Pancreas (tissue), 10 donors: ENCODE measurements at regions of chr15 and their contacts with region 1.

Region 1: DNA sequence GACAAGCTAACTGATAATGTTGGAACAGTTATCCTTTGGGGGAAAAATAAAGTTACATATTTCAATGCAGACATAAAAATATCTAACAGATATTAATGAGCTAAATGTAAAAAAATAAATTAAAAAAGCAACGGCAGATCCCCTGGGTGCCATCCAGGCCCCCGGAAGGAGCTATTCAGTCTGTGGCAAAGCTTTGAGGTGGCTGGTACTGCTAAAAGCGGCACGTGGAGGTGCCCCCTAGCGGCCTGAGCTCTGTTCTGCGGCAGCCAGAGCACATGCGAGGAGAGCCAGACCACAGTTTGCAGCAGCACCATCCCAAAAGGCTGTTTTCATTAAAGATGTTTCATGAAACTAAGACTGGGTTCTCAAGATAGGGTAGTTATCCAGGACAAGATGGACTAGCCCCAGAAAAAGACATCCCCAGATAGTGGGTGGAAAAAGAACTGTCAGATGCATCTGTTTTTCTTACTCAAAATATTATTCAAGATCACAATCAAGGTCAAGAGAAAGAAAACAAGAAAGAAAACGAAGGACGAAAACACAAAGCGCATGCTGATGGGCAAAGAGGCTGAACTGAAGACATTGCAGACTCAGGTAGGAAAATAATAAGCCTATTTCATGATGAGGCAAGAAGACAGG is 18.7 kb downstream of the AP3S2 start:
- DNase-seq: peak; percentile 76 to 93 (median 86)
- ATAC-seq: peak; percentile 90 to 96 (median 95)
- H3K4me3 ChIP-seq: no peak overlapping the region
- H3K27ac ChIP-seq: no peak overlapping the region
- H3K4me1 ChIP-seq: peaks cover 20 to 41% (median 41%) of the 10 kb centered on the region in 3 donors
- H3K27me3 ChIP-seq: no peaks in the 10 kb centered on the region
- CTCF ChIP-seq: peak; percentile 70 to 95 (median 84)

Region 2: GRCh38 chr15:89740137-89740536 is 134.9 kb before region 1 on chr15:
- intact Hi-C with region 1: loop called in 1 of 3 experiments (anchors 5 kb)
- DNase-seq: peak in 2 of 6 donors; percentile 56 to 73
- ATAC-seq: peak; percentile 85 to 98 (median 94)
- H3K4me3 ChIP-seq: no peak overlapping the region
- H3K27ac ChIP-seq: no peak overlapping the region
- H3K4me1 ChIP-seq: no peaks in the 10 kb centered on the region
- H3K27me3 ChIP-seq: no peaks in the 10 kb centered on the region
- CTCF ChIP-seq: peak; percentile 84 to 95 (median 94)

Region 3: DNA sequence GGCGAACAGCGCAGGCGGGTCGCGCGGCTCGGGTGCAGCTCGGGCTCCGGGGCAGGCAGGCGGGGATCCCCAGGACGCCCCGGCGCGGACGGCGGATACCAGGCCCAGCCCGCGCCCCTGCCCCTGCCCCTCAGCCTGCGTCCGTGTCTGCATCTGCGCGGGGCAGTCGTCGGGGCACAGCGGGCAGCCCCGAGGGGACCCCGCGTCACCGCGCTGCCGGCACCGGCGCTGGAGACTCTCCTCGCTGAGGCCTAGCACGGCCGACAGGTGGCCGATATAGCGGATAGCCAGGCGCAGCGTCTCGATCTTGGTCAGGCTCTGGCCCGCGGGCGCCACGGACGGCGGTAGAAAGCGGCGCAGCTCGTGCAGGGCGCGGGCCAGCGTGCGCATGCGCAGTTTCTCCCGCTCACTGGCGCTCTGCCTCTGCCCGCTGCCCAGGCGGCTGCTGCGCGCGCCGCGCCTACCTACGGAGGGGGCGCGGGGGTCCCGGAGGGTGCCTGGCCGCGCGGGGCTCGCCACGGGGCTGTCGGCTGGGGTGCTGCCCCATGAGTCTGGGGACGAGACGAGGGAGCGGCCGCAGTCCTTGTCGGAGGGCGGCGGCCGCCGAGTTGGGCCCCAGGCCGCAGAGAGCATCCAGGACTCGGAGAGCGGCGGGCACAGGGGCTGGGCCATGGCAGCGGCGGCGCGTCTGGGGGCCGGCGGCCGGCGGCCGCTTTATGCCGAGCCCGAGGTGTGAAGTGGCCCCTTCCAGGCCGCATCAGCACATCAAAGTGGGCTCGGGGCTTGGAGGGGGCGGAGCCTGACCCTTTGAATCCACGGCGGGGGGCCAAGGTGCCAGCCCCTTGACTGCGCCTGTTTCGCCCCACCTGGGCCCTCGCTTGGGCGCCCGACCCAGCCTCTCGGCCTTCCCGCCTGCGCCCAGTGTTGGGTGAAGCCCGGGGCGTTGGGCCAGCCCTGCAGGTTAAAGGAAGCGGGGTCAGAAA is 124.2 kb before region 1 on chr15 and contains the start of gene MESP1:
- intact Hi-C with region 1: loop called in 1 of 3 experiments (anchors 10 kb)
- DNase-seq: peak; percentile 91 to 99 (median 96)
- ATAC-seq: peak; percentile 87 to 92 (median 90)
- H3K4me3 ChIP-seq: peak within 1 kb of the TSS; percentile 33 to 67 (median 56)
- H3K27ac ChIP-seq: peak within 1 kb of the TSS; percentile 64 to 80 (median 72)
- H3K4me1 ChIP-seq: peaks cover 5 to 13% (median 11%) of the 10 kb centered on the region in 3 donors
- H3K27me3 ChIP-seq: no peaks in the 10 kb centered on the region
- CTCF ChIP-seq: peak; percentile 52 to 81 (median 78)
- total RNA-seq, gene MESP1: 1.5 to 4.0 (median 2.4) TPM